ENCODE measurements at regions of chr9 and their contacts with region 1.

Region 1: DNA sequence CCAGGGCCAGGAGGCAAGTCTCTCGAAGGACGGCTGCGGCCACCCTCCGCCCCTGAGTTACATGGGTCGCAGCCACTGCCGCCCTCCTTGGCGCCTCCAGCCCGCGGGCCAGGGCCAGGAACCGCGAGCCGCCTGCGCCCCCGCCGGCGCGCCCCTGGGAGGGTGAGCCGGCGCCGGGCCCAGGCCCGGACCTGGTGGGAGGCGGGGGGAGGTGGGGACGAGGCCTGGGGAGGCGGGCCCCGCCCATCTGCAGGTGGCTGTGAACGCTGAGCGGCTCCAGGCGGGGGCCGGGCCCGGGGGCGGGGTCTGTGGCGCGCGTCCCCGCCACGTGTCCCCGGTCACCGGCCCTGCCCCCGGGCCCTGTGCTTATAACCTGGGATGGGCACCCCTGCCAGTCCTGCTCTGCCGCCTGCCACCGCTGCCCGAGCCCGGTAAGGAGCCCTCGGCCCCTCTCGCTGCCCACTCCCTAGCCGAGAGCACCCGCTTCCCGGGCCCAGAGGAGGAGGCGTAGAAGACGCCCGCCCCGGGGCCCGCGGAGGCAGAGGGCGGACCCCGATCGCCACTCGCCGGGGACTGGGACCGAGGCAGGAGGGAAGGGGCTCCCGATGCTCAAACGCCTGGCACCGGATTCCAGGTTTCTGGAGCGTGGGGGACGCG is at the start of gene ASS1:
- DNase-seq: peak; percentile 77
- H3K4me3 Mint-ChIP-seq: peak within 1 kb of the TSS; percentile 95
- H3K27ac Mint-ChIP-seq: peak within 1 kb of the TSS; percentile 96
- H3K4me1 Mint-ChIP-seq: peaks cover 27% of the 10 kb centered on the region
- H3K27me3 Mint-ChIP-seq: no peaks in the 10 kb centered on the region
- CTCF ChIP-seq: no peak
- total RNA-seq, gene ASS1: 204 and 299 TPM in 2 replicates

Region 2: GRCh38 chr9:130352081-130352480 is 92.6 kb before region 1 on chr9:
- CTCF ChIA-PET with region 1: no interaction called
- POLR2A ChIA-PET with region 1: interaction called, 3 read pairs
- intact Hi-C with region 1: loop called (anchors 5 kb)
- DNase-seq: peak; percentile 68
- H3K4me3 Mint-ChIP-seq: no peak overlapping the region
- H3K27ac Mint-ChIP-seq: peak overlapping the region; percentile 81
- H3K4me1 Mint-ChIP-seq: peaks cover 12% of the 10 kb centered on the region
- H3K27me3 Mint-ChIP-seq: no peaks in the 10 kb centered on the region
- CTCF ChIP-seq: no peak

Region 3: GRCh38 chr9:130426883-130427282 is 17.8 kb before region 1 on chr9:
- CTCF ChIA-PET with region 1: no interaction called
- POLR2A ChIA-PET with region 1: interaction called, 12 read pairs
- intact Hi-C with region 1: no loop called
- DNase-seq: peak; percentile 96
- H3K4me3 Mint-ChIP-seq: no peak overlapping the region
- H3K27ac Mint-ChIP-seq: peak overlapping the region; percentile 62
- H3K4me1 Mint-ChIP-seq: peaks cover 8% of the 10 kb centered on the region
- H3K27me3 Mint-ChIP-seq: no peaks in the 10 kb centered on the region
- CTCF ChIP-seq: no peak

Region 4: GRCh38 chr9:130461218-130461630 is 16.5 kb after region 1 on chr9:
- CTCF ChIA-PET with region 1: interaction called, 13 read pairs
- POLR2A ChIA-PET with region 1: interaction called, 3 read pairs
- intact Hi-C with region 1: no loop called
- DNase-seq: peak; percentile 57
- H3K4me3 Mint-ChIP-seq: no peak overlapping the region
- H3K27ac Mint-ChIP-seq: no peak overlapping the region
- H3K4me1 Mint-ChIP-seq: no peaks in the 10 kb centered on the region
- H3K27me3 Mint-ChIP-seq: no peaks in the 10 kb centered on the region
- CTCF ChIP-seq: peak; percentile 88

Region 5: DNA sequence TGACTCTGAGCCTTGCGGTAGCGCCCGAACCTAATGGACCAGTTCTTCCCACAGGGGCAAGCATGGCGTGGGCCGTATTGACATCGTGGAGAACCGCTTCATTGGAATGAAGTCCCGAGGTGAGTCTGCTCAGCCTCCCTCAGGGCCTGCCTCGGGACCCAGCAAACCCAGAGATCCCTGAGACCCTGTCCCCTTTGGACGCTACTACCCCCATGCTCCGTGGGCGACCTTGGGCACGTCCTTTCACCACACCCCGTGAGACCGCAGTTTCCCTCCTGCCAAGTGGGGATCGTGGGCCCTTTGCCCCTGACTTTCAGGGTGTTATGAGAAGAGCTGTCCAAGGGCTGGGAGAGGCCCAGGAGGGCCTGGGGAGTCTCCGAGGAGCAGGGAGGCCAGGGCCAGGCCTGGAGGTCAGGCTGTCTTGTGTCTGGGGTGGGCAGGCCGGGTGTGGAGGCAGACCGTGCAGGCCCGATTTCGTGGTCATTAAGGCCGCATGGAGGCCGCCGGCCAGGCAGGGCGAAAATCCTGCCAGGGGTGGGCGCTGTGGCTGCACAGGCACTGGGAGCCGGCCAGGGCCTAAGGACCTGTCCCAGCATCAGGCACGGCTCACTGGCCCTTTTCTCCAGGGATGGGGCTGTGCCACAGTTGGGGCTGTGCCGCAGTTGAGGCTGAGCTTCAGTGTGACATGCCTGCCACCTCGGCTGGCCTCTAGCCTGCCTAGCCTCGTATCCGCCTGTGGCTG is 35.8 kb after region 1 on chr9:
- CTCF ChIA-PET with region 1: no interaction called
- POLR2A ChIA-PET with region 1: no interaction called
- intact Hi-C with region 1: no loop called
- DNase-seq: no peak
- H3K4me3 Mint-ChIP-seq: no peak overlapping the region
- H3K27ac Mint-ChIP-seq: no peak overlapping the region
- H3K4me1 Mint-ChIP-seq: no peaks in the 10 kb centered on the region
- H3K27me3 Mint-ChIP-seq: no peaks in the 10 kb centered on the region
- CTCF ChIP-seq: no peak